ENCODE measurements at regions of chr20 and their contacts with region 1.

Region 1: DNA sequence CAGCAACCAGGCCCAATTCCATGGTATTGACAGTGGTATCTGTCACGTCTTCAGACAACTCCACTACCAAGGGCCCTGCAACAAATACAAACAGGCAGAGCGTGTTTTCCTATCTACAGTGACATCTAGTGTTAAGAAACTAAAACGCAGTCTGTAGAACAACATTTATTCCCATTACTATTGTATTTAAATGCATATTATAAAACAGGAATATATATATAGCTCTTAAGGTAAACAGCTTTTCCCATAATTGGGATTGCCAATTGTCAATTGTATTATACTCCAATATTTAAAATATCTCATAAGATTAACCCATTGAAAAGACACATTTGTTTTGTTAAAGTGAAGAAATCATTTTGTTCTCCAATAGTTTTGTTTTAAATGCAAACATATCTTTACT is 97.2 kb downstream of the KIF16B start:
- DNase-seq: no peak
- ATAC-seq: peak; percentile 79 to 89 (median 84)
- H3K4me3 ChIP-seq: no peak overlapping the region
- H3K27ac ChIP-seq: no peak overlapping the region
- H3K4me1 ChIP-seq: peaks cover 29% of the 10 kb centered on the region
- H3K27me3 ChIP-seq: no peaks in the 10 kb centered on the region
- CTCF ChIP-seq: peak; percentile 73

Region 2: DNA sequence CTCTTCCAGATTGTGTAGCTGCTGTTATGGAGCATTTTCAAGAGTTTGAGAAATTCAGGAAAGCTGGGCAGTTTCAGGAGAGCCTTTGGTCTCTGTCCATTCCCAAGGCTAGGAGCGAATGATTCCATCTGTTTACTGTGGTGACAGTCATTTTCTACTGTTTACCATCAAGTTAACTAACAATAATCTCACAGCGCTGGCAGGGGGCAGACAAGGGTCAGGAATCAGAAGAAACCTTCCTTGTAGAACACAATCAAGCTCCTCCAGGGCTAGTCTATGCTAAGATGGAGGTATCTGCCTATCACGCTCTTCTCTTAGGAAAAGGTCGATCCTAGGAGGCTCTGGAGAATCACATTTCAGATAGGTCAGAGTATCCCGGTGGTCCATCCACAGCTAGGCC is 196.7 kb before region 1 on chr20:
- intact Hi-C with region 1: loop called (anchors 10 kb)
- DNase-seq: no peak
- ATAC-seq: no peak
- H3K4me3 ChIP-seq: no peak overlapping the region
- H3K27ac ChIP-seq: no peak overlapping the region
- H3K4me1 ChIP-seq: peaks cover 14% of the 10 kb centered on the region
- H3K27me3 ChIP-seq: no peaks in the 10 kb centered on the region
- CTCF ChIP-seq: no peak

Region 3: GRCh38 chr20:16350465-16350864 is 125.6 kb before region 1 on chr20:
- intact Hi-C with region 1: loop called in 1 of 2 experiments (anchors 10 kb)
- DNase-seq: peak; percentile 30 to 64
- ATAC-seq: peak; percentile 68 to 81 (median 74)
- H3K4me3 ChIP-seq: no peak overlapping the region
- H3K27ac ChIP-seq: peak overlapping the region; percentile 54
- H3K4me1 ChIP-seq: peaks cover 27% of the 10 kb centered on the region
- H3K27me3 ChIP-seq: no peaks in the 10 kb centered on the region
- CTCF ChIP-seq: no peak

Region 4: GRCh38 chr20:16539280-16540021 is 63.4 kb after region 1 on chr20:
- intact Hi-C with region 1: no loop called
- DNase-seq: no peak
- ATAC-seq: no peak
- H3K4me3 ChIP-seq: no peak overlapping the region
- H3K27ac ChIP-seq: no peak overlapping the region
- H3K4me1 ChIP-seq: peaks cover 14% of the 10 kb centered on the region
- H3K27me3 ChIP-seq: no peaks in the 10 kb centered on the region
- CTCF ChIP-seq: no peak

Measured in psoas muscle (tissue), 8 donors.